ENCODE measurements at regions of chr4 and their contacts with region 1.

Region 1: DNA sequence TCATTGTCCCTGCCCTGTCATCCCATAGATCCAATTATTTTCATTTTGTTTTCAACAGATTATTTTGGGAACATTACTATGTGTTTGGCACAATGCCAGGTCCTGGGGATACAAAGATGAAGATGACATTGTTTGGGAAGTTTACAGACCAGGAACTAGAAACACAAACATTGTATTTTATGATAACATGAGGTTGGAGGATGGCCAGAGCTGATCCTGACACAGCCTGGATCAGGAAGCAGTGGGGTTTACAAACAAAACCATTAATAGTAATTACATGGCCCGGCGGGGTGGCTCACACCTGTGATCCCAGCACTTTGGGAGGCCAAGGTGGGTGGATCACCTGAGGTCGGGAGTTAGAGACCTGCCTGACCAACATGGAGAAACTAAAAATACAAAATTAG is 29.9 kb downstream of the CLRN2 start:
- DNase-seq: no peak
- ATAC-seq: peak in 1 of 4 donors; percentile 22
- H3K4me3 ChIP-seq: no peak overlapping the region
- H3K27ac ChIP-seq: peak overlapping the region in 1 of 4 donors; percentile 51
- H3K4me1 ChIP-seq: no peaks in the 10 kb centered on the region
- H3K27me3 ChIP-seq: no peaks in the 10 kb centered on the region
- CTCF ChIP-seq: no peak

Region 2: GRCh38 chr4:16524911-16525554 is 1019.8 kb before region 1 on chr4:
- intact Hi-C with region 1: no loop called
- DNase-seq: no peak
- ATAC-seq: peak in 2 of 4 donors; percentile 38 to 45
- H3K4me3 ChIP-seq: no peak overlapping the region
- H3K27ac ChIP-seq: no peak overlapping the region
- H3K4me1 ChIP-seq: no peaks in the 10 kb centered on the region
- H3K27me3 ChIP-seq: no peaks in the 10 kb centered on the region
- CTCF ChIP-seq: no peak

Region 3: DNA sequence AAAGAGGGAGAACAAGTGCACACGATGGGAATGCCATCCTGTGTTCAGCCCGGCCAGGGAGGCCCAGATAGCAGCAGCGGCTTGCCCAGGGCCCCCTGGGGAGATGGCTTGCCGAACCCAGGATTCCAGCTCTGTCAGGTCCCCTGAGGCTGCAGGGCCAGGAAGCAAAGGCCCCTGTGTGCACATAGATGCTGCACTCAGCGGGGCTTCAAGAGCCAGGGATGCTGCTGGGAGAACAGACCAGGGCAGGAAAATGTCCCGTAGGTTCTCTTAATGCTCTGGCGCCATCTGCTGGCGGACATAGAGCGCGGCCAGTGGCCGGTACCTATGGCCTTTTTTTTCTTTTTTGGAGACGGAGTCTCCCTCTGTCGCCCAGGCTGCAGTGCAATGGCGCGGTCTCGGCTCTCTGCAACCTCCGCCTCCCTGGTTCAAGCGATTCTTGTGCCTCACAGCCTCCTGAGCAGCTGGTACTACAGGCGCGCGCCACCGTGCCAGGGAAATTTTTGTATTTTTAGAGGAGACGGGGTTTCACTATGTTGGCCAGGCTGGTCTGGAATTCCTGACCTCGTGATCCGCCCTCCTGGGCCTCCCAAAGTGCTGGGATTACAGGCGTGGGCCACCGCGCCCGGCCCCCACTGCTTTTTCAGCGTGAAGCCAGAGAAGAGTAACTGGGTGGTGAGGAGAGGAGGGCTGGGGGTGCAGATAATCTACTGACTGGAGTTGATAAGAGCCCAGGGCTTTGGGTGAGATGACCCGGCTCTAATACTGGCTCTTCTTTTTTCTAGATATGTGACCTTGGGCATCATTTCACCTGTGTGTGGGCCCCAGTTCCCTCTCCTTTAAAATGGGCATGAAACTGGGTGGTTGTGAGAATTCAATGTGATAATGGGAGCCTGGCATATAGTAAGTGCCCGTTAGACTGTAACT is 92.1 kb after region 1 on chr4:
- intact Hi-C with region 1: loop called in 2 of 3 experiments (anchors 5 kb)
- DNase-seq: peak; percentile 40 to 91 (median 75)
- ATAC-seq: peak; percentile 76 to 95 (median 91)
- H3K4me3 ChIP-seq: no peak overlapping the region
- H3K27ac ChIP-seq: no peak overlapping the region
- H3K4me1 ChIP-seq: no peaks in the 10 kb centered on the region
- H3K27me3 ChIP-seq: no peaks in the 10 kb centered on the region
- CTCF ChIP-seq: peak; percentile 73 to 88 (median 82)

Region 4: GRCh38 chr4:17642404-17642783 is 97.6 kb after region 1 on chr4:
- intact Hi-C with region 1: loop called in 2 of 3 experiments (anchors 5 kb)
- DNase-seq: no peak
- ATAC-seq: no peak
- H3K4me3 ChIP-seq: no peak overlapping the region
- H3K27ac ChIP-seq: no peak overlapping the region
- H3K4me1 ChIP-seq: no peaks in the 10 kb centered on the region
- H3K27me3 ChIP-seq: no peaks in the 10 kb centered on the region
- CTCF ChIP-seq: no peak

Measured in pancreas (tissue), 10 donors.